Sigmoid colon (tissue), 7 donors: ENCODE measurements at regions of chr11 and their contacts with region 1.

Region 1: DNA sequence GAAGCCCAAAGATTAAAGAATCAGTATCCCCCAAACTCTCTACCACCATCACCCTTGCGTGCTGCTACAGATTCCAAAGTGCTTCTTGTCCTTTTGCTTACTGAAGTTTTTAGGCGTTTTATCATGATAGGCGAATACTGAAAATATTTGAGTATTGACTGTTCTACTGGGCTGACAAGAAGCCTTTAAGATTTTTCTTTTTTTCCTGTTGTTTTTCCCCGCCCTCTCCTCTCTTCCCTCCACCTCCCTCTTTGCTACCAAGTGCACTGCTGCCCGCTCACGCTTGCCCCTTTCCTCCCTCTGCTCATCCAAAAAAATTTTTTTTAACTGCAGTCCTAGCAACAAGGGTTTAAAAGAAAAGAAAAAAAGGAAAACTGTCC is 672 bp downstream of the SPCS2 start:
- DNase-seq: no peak
- H3K4me3 ChIP-seq: peak overlapping the region; percentile 70 to 90 (median 76)
- H3K27ac ChIP-seq: peak overlapping the region; percentile 77 to 86 (median 85)
- H3K4me1 ChIP-seq: peaks cover 0 to 41% (median 28%) of the 10 kb centered on the region in 4 donors
- H3K27me3 ChIP-seq: no peaks in the 10 kb centered on the region
- CTCF ChIP-seq: no peak
- EP300 ChIP-seq: no peak
- POLR2A ChIP-seq: no peak

Region 2: DNA sequence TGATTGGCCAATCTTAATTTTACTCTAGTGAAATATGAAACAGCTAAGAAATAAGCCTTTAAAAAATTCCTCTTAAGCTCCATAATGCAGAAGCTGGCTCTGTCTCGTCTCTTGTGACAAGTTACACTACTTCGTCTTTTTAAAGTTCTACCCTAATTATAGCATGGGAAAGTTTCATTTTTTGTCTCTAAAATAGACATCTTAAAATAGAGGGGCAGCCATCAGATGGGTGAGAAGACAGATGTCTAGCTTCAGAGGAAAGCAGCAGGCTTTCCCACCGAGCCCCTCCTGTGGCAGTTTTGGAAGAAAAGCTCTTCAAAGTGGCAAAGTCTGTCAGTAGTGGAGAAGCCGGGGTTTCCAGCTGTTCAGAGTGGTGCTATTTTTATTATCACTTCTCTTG is 40.4 kb before region 1 on chr11:
- intact Hi-C with region 1: no loop called
- DNase-seq: no peak
- H3K4me3 ChIP-seq: no peak overlapping the region
- H3K27ac ChIP-seq: no peak overlapping the region
- H3K4me1 ChIP-seq: no peaks in the 10 kb centered on the region
- H3K27me3 ChIP-seq: no peaks in the 10 kb centered on the region
- CTCF ChIP-seq: no peak
- EP300 ChIP-seq: no peak
- POLR2A ChIP-seq: no peak

Region 3: DNA sequence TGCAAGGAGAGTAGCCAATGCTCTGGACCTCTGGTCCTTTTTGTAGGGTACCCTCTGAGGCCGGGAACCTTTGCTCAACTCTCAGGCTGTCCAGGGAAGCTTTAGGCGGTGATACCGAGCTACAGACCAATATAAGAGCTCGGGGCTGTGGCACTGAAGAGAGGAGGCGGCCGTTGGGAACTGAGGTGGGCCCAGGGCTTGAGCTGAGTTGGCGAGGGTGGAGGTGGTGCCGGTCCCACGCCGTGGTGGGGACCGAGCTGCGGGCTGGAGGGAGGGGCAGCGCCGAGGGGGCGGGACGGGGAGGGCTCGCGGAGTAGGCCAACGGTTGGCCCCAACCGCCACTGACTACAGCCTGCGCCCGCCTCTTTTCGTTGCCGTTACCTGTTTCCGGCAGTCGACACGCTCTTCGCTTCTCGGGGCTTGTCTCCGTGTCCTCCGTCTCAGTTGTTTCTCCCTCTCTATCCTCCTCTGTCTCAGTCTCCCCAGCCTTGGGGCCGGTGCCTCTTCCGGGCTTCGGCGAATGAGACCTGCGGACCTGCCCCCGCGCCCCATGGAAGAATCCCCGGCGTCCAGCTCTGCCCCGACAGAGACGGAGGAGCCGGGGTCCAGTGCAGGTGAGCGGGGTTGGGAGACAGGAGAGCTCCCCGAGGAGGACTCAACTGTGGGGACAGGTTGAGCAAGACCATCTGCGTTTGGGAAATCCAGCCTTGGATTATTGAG is 39.0 kb after region 1 on chr11 and contains the start of gene NEU3:
- intact Hi-C with region 1: loop called (anchors 5 kb)
- DNase-seq: peak; percentile 84
- H3K4me3 ChIP-seq: peak within 1 kb of the TSS; percentile 48 to 74 (median 64)
- H3K27ac ChIP-seq: peak within 1 kb of the TSS; percentile 67 to 71 (median 71)
- H3K4me1 ChIP-seq: peaks cover 0 to 12% (median 6%) of the 10 kb centered on the region in 4 donors
- H3K27me3 ChIP-seq: no peaks in the 10 kb centered on the region
- CTCF ChIP-seq: no peak
- EP300 ChIP-seq: no peak
- POLR2A ChIP-seq: no peak
- total RNA-seq, gene NEU3: 3.3 to 10.2 (median 4.8) TPM